ENCODE measurements at regions of chr11 and their contacts with region 1.

Region 1: GRCh38 chr11:35363854-35364780 is 55.2 kb downstream of the SLC1A2 start:
- DNase-seq: peak; percentile 87
- ATAC-seq: peak; percentile 84
- H3K4me3 ChIP-seq: no peak overlapping the region
- H3K27ac ChIP-seq: peak overlapping the region; percentile 51
- H3K4me1 ChIP-seq: peaks cover 31% of the 10 kb centered on the region
- H3K27me3 ChIP-seq: no peaks in the 10 kb centered on the region
- CTCF ChIP-seq: no peak

Region 2: GRCh38 chr11:35260342-35260985 is 103.7 kb before region 1 on chr11:
- CTCF ChIA-PET with region 1: no interaction called
- POLR2A ChIA-PET with region 1: no interaction called
- intact Hi-C with region 1: loop called (anchors 1 kb)
- DNase-seq: peak; percentile 85
- ATAC-seq: peak; percentile 93
- H3K4me3 ChIP-seq: peak overlapping the region; percentile 20; the same call in 1 of the 2 replicates
- H3K27ac ChIP-seq: peak overlapping the region; percentile 42
- H3K4me1 ChIP-seq: peaks cover 12% of the 10 kb centered on the region
- H3K27me3 ChIP-seq: no peaks in the 10 kb centered on the region
- CTCF ChIP-seq: no peak